ENCODE measurements at regions of chr10 and their contacts with region 1.

Region 1: DNA sequence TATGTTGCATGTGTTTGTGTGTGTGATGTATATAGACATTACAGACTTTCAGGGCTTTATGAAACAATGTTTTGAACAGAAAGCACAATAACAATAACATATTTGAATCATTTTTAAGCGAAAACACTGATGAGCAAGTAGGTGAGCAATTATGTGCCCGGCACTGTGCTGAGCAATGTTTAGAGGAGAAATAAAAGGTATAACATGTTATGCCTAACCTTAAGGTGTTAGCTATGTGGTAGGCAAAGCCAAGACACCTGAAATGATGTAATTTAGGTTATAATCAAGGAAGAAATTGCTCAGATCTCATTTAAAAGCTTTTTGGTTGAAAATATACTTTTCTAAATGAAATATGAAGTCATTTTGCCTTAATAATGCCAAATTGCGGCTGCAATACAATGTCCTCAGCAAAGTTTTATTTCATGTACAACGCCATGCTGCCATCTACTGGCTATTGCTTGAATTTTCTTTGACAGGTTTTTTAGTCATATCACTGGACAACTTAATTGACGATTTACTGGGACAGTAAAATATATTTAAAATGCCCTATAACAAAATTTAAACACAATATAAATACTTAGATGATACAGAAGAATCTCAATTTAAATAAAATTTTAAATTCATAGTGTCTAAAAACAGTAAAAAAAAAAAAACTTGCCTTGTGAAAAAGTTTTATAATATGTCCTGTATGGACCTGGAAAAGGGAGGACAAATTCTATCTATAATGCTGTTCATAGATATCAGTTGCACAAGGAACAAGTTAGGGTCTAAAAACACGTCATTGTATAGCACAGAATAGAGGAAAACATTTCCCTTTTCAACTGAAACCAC is 131.1 kb upstream of the CDK1 start:
- DNase-seq: peak; percentile 48
- ATAC-seq: peak; percentile 74
- H3K4me3 ChIP-seq: no peak overlapping the region
- H3K27ac ChIP-seq: no peak overlapping the region
- H3K4me1 ChIP-seq: peaks cover 0 to 3% of the 10 kb centered on the region in 2 experiments; a peak in 1 of 4 replicates
- H3K27me3 ChIP-seq: no peaks in the 10 kb centered on the region
- CTCF ChIP-seq: peak; percentile 60 to 82 (median 75)
- POLR2A ChIP-seq: no peak
- RAD21 ChIP-seq: peak; percentile 80

Region 2: GRCh38 chr10:60099998-60100747 is 547.0 kb before region 1 on chr10:
- CTCF ChIA-PET with region 1: no interaction called
- POLR2A ChIA-PET with region 1: no interaction called
- RAD21 ChIA-PET with region 1: no interaction called
- intact Hi-C with region 1: loop called (anchors 5 kb)
- DNase-seq: peak; percentile 39
- ATAC-seq: peak; percentile 71
- H3K4me3 ChIP-seq: no peak overlapping the region
- H3K27ac ChIP-seq: no peak overlapping the region
- H3K4me1 ChIP-seq: peaks cover 0 to 4% of the 10 kb centered on the region in 2 experiments; a peak in 1 of 4 replicates
- H3K27me3 ChIP-seq: no peaks in the 10 kb centered on the region
- CTCF ChIP-seq: peak; percentile 48 to 66 (median 65); a peak in 5 of 6 replicates
- POLR2A ChIP-seq: no peak
- RAD21 ChIP-seq: peak; percentile 76

Region 3: DNA sequence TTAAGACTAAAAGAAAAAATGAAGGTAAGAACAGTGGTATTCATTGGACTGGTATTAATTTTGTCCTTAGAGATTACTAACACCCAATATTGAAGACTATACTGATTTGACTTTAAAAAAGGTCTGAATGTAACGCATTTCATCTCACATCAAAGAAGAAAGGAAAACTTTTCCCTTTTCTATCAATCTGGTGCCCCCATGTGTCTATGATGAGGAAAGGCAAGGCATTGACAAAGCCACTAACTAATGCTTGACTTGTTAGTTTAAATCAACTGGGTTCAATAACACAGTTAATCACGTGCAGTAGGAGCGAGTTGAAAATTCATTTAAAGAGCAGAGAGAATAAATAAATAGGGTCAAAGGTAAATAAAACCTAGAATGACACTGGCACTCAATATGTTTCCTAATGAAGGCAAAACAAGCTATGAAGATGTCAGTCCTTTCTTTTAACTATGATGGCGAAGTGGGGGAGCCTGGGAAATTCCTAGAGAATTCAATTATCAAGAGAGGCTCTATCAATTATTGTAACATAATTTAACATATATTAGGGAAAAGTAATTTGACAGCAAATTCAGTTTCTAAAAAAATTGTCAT is 438.4 kb before region 1 on chr10:
- CTCF ChIA-PET with region 1: no interaction called
- POLR2A ChIA-PET with region 1: no interaction called
- RAD21 ChIA-PET with region 1: no interaction called
- intact Hi-C with region 1: loop called (anchors 2 kb)
- DNase-seq: peak; percentile 23
- ATAC-seq: peak; percentile 60; the same call in 1 of the 2 replicates
- H3K4me3 ChIP-seq: no peak overlapping the region
- H3K27ac ChIP-seq: no peak overlapping the region
- H3K4me1 ChIP-seq: no peaks in the 10 kb centered on the region
- H3K27me3 ChIP-seq: no peaks in the 10 kb centered on the region
- CTCF ChIP-seq: peak; percentile 76 to 86 (median 85)
- POLR2A ChIP-seq: no peak
- RAD21 ChIP-seq: peak; percentile 89

Region 4: DNA sequence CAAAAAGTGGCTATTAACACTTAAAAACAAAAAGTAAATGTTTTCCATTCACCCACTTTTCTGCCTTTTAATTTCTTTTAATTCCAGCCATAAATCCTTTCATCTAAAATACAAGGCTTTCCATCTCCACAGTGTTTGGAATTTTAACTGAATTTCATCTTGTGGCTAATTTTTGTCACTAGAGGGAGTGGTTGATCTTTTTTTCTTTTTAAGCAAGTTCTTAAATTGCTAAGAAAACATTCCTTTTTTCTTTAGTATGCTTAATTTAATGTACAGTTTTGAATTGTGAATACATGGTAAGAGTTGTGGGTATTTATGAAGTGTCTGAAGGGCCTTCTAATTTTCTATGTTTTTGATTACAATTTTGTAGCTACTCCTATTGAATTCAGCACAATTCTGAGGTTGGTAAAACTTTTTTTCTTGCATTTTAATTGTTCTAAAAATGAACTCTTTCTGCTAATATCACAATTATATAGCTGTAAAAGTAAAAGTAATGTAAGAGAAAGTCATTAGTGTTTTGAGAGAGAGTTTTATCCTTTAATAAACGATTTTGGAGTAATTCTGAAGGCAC is 202.6 kb before region 1 on chr10:
- CTCF ChIA-PET with region 1: interaction called, 33 read pairs
- POLR2A ChIA-PET with region 1: no interaction called
- RAD21 ChIA-PET with region 1: no interaction called
- intact Hi-C with region 1: loop called (anchors 1 kb)
- DNase-seq: peak; percentile 18
- ATAC-seq: no peak
- H3K4me3 ChIP-seq: no peak overlapping the region
- H3K27ac ChIP-seq: no peak overlapping the region
- H3K4me1 ChIP-seq: no peaks in the 10 kb centered on the region; a peak in 1 of 4 replicates
- H3K27me3 ChIP-seq: no peaks in the 10 kb centered on the region
- CTCF ChIP-seq: peak; percentile 36 to 70 (median 66); a peak in 4 of 6 replicates
- POLR2A ChIP-seq: no peak
- RAD21 ChIP-seq: peak; percentile 75

Region 5: DNA sequence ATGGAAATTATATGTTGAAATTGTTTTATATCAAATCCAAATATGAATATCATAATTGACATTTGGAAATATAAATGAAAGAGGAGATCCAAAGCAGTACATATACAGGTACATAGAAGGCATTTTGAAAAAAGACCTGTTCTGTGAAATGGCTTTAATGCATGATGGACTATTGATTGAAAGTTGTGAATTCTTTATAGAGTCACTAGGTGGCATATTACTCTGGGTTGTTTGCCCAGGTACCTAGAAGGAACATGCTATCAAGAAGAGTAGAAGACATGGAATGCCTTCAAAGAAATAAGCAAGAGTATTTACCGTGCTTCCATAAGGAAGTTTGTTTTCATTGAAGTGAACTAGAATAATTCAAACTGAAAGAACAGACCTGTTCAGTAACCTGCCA is 97.5 kb before region 1 on chr10:
- CTCF ChIA-PET with region 1: no interaction called
- POLR2A ChIA-PET with region 1: no interaction called
- RAD21 ChIA-PET with region 1: no interaction called
- intact Hi-C with region 1: loop called (anchors 1 kb)
- DNase-seq: peak; percentile 28
- ATAC-seq: peak; percentile 89
- H3K4me3 ChIP-seq: no peak overlapping the region
- H3K27ac ChIP-seq: no peak overlapping the region
- H3K4me1 ChIP-seq: no peaks in the 10 kb centered on the region
- H3K27me3 ChIP-seq: no peaks in the 10 kb centered on the region
- CTCF ChIP-seq: peak; percentile 52 to 63 (median 62); a peak in 5 of 6 replicates
- POLR2A ChIP-seq: no peak
- RAD21 ChIP-seq: peak; percentile 74